WTC11 (cell line): ENCODE measurements at regions of chr14 and their contacts with region 1.

Region 1: GRCh38 chr14:74425525-74426201 is 347 bp downstream of the SYNDIG1L start:
- DNase-seq: peak; percentile 82
- ATAC-seq: peak; percentile 40
- H3K4me3 Mint-ChIP-seq: peak overlapping the region; percentile 55
- H3K27ac Mint-ChIP-seq: no peak overlapping the region
- H3K4me1 Mint-ChIP-seq: peaks cover 63% of the 10 kb centered on the region
- H3K27me3 Mint-ChIP-seq: peaks cover 22% of the 10 kb centered on the region
- CTCF ChIP-seq: no peak

Region 2: DNA sequence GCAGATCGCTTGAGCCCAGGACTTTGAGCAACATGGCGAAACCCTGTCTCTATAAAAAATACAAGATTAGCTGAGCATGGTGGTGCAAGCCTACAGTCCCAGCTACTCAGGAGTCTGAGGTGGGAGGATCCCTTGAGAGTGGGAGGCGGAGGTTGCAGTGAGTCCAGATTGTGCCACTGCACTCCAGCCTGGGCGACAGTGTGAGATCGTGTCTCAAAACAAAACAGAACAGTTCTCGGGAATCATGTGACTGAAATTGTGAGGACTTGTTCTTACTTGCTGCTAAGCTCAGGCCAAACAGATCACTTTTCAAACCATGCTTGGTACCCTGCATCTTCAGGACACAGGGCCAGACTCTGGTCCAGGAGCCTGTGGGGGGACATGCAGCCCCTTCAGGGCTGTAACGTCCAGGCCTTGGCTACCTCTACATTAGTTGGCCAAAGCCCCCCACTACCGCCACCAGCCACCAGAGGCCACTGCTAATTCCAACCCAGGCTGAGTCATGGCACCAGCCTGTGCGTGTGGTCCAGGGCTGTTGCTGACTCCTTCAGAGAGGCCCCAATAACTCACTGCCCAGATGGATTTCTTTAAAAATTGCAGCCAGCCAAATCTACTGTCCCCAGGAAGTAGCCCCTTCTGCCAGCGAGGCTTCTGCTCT is 33.8 kb after region 1 on chr14:
- CTCF ChIA-PET with region 1: interaction called, 11 read pairs
- POLR2A ChIA-PET with region 1: no interaction called
- DNase-seq: peak; percentile 77
- ATAC-seq: peak; percentile 98
- H3K4me3 Mint-ChIP-seq: no peak overlapping the region
- H3K27ac Mint-ChIP-seq: no peak overlapping the region
- H3K4me1 Mint-ChIP-seq: peaks cover 3% of the 10 kb centered on the region
- H3K27me3 Mint-ChIP-seq: peaks cover 4% of the 10 kb centered on the region; the same call in 1 of the 2 replicates
- CTCF ChIP-seq: peak; percentile 45